B cell (primary cell): ENCODE measurements at regions of chr2 and their contacts with region 1.

Region 1: GRCh38 chr2:86562922-86563649 is at the start of gene CHMP3:
- DNase-seq: peak; percentile 99
- ATAC-seq: peak; percentile 86
- H3K4me3 ChIP-seq: peak within 1 kb of the TSS; percentile 87 to 100 (median 95)
- H3K4me3 Mint-ChIP-seq: peak within 1 kb of the TSS; percentile 93
- H3K27ac ChIP-seq: peak within 1 kb of the TSS; percentile 99 to 100
- H3K27ac Mint-ChIP-seq: peak within 1 kb of the TSS; percentile 98
- H3K4me1 ChIP-seq: peaks cover 20 to 26% of the 10 kb centered on the region in 2 donors
- H3K4me1 Mint-ChIP-seq: peaks cover 41% of the 10 kb centered on the region
- H3K27me3 ChIP-seq: no peaks in the 10 kb centered on the region
- H3K27me3 Mint-ChIP-seq: peaks cover 3% of the 10 kb centered on the region
- CTCF ChIP-seq: no peak
- total RNA-seq, gene CHMP3: 61.4 and 72.5 TPM in 2 replicates

Region 2: GRCh38 chr2:86157009-86157556 is 406.0 kb before region 1 on chr2:
- CTCF ChIA-PET with region 1: no interaction called
- POLR2A ChIA-PET with region 1: no interaction called
- intact Hi-C with region 1: no loop called
- DNase-seq: no peak
- ATAC-seq: no peak
- H3K4me3 ChIP-seq: no peak overlapping the region
- H3K4me3 Mint-ChIP-seq: no peak overlapping the region
- H3K27ac ChIP-seq: no peak overlapping the region
- H3K27ac Mint-ChIP-seq: no peak overlapping the region
- H3K4me1 ChIP-seq: no peaks in the 10 kb centered on the region
- H3K4me1 Mint-ChIP-seq: no peaks in the 10 kb centered on the region
- H3K27me3 ChIP-seq: no peaks in the 10 kb centered on the region
- H3K27me3 Mint-ChIP-seq: no peaks in the 10 kb centered on the region
- CTCF ChIP-seq: no peak

Region 3: DNA sequence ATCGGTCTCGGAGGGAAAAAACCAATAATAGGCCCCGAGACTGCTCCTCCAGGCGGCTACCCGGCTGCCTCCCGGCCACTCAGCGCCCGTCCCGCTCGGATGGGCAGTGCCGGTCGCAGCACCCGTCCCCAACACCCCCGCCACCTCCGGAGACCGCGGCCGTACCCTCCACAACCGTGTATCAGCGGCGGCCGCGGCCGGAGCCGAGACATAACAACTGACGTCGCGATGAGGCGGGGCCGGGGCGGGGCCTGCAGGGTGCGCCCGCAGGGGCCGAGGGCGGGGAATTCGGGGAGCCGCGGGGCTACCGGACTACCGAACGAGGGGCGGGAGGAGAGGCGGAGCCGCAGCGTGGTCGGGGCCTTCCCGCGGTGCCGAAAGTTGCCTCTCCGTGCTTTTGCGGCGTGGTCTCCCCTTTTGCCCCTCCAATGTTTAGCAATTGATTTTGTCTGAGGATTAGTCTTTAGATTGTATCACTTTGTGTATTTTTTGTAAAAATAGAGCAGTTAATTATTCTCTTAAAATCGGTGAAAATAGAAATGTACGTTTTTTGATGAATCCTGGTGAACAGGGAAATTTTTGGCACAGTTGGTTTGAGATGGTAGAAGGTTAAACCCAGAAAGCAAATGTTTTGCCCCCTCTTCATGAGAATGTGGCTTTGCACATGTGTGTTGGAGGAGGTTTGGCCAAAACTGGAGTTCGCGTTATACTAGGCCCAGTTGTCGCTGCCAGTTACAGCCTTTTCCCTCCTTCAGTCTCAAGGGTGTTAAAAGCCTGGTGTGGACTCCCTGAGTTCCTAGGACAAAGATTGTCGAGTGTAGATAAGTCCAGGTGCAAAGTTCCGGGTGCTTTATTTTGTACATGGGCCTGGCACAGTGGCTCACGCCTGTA is 60.8 kb after region 1 on chr2 and contains the start of gene RNF103:
- CTCF ChIA-PET with region 1: no interaction called
- POLR2A ChIA-PET with region 1: interaction called, 11 read pairs
- intact Hi-C with region 1: loop called (anchors 1 kb)
- DNase-seq: peak; percentile 97
- ATAC-seq: peak; percentile 82
- H3K4me3 ChIP-seq: peak within 1 kb of the TSS; percentile 71 to 87 (median 78)
- H3K4me3 Mint-ChIP-seq: peak within 1 kb of the TSS; percentile 94
- H3K27ac ChIP-seq: peak within 1 kb of the TSS; percentile 93 to 94
- H3K27ac Mint-ChIP-seq: peak within 1 kb of the TSS; percentile 97
- H3K4me1 ChIP-seq: peaks cover 17% of the 10 kb centered on the region in 2 donors
- H3K4me1 Mint-ChIP-seq: peaks cover 35% of the 10 kb centered on the region
- H3K27me3 ChIP-seq: no peaks in the 10 kb centered on the region
- H3K27me3 Mint-ChIP-seq: no peaks in the 10 kb centered on the region
- CTCF ChIP-seq: no peak
- total RNA-seq, gene RNF103: 36.1 and 37.2 TPM in 2 replicates

Region 4: GRCh38 chr2:86675511-86676015 is 112.5 kb after region 1 on chr2:
- CTCF ChIA-PET with region 1: no interaction called
- POLR2A ChIA-PET with region 1: no interaction called
- intact Hi-C with region 1: no loop called
- DNase-seq: peak; percentile 12
- ATAC-seq: no peak
- H3K4me3 ChIP-seq: no peak overlapping the region
- H3K4me3 Mint-ChIP-seq: no peak overlapping the region
- H3K27ac ChIP-seq: no peak overlapping the region
- H3K27ac Mint-ChIP-seq: no peak overlapping the region
- H3K4me1 ChIP-seq: no peaks in the 10 kb centered on the region
- H3K4me1 Mint-ChIP-seq: no peaks in the 10 kb centered on the region
- H3K27me3 ChIP-seq: no peaks in the 10 kb centered on the region
- H3K27me3 Mint-ChIP-seq: no peaks in the 10 kb centered on the region
- CTCF ChIP-seq: no peak

Region 5: GRCh38 chr2:88016086-88016959 is 1453.2 kb after region 1 on chr2 and contains the start of gene RNU2-63P:
- CTCF ChIA-PET with region 1: no interaction called
- POLR2A ChIA-PET with region 1: no interaction called
- intact Hi-C with region 1: loop called (anchors 10 kb)
- DNase-seq: peak; percentile 94
- ATAC-seq: peak; percentile 84
- H3K4me3 ChIP-seq: peak within 1 kb of the TSS; percentile 39 to 95 (median 91)
- H3K4me3 Mint-ChIP-seq: peak within 1 kb of the TSS; percentile 100
- H3K27ac ChIP-seq: peak within 1 kb of the TSS; percentile 98 to 99
- H3K27ac Mint-ChIP-seq: peak within 1 kb of the TSS; percentile 98
- H3K4me1 ChIP-seq: peaks cover 6 to 15% of the 10 kb centered on the region in 2 donors
- H3K4me1 Mint-ChIP-seq: peaks cover 25% of the 10 kb centered on the region
- H3K27me3 ChIP-seq: no peaks in the 10 kb centered on the region
- H3K27me3 Mint-ChIP-seq: no peaks in the 10 kb centered on the region
- CTCF ChIP-seq: no peak
- total RNA-seq, gene RNU2-63P: 8.9 and 9.3 TPM in 2 replicates